Activated CD4-positive, alpha-beta T cell treated with anti-CD3 and anti-CD28 coated beads, Interleukin-2, amount 10 ng/mL, durations not matched to agents 24 days and 14 days (primary cell): ENCODE measurements at regions of chr15 and their contacts with region 1.

Region 1: GRCh38 chr15:92069308-92070250 is 216.1 kb downstream of the SLCO3A1 start:
- DNase-seq: peak; percentile 69
- H3K4me3 Mint-ChIP-seq: peak overlapping the region; percentile 60
- H3K27ac Mint-ChIP-seq: peak overlapping the region; percentile 11
- H3K4me1 Mint-ChIP-seq: peaks cover 27% of the 10 kb centered on the region
- H3K27me3 Mint-ChIP-seq: peaks cover 1% of the 10 kb centered on the region

Region 2: DNA sequence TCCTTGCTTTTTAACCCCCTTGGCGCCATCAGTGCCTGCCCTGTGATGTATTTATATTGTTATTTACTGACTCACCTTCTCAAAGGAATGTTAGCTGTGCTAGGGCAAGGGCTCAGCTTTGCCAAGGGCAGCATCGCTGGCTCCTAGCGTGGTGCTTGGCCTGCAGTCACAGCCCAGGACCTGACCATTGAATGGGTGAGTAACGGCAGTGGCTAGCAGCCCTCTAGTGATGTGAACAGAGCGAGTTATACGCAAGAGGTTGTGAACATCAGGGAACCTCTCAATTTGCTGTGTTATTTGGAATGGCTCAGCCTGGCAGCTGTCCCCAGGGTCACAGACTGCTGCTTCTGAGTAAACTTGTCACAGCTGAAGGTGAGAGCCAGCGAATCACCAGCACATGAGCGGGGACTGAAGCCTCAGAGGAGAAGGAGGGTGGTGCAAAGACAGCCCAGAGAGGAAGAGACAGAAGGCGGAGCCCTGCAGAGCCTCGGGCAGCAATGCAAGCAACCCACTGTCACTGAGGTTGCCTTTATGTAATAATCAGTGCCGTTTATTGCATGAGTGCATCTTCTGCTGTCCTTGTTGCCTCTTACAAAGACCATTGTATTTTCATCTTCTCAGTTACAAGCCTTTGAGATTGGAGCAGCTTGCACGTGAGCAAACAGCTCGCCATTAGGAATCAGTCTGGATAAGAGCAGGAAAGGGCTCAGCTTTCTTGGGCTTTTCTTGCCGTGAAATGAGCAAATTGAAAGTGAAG is 57.8 kb before region 1 on chr15:
- intact Hi-C with region 1: loop called (anchors 5 kb)
- DNase-seq: peak; percentile 73
- H3K4me3 Mint-ChIP-seq: peak overlapping the region; percentile 67
- H3K27ac Mint-ChIP-seq: peak overlapping the region; percentile 74
- H3K4me1 Mint-ChIP-seq: peaks cover 46% of the 10 kb centered on the region
- H3K27me3 Mint-ChIP-seq: no peaks in the 10 kb centered on the region